ENCODE measurements at regions of chr13 and their contacts with region 1.

Region 1: DNA sequence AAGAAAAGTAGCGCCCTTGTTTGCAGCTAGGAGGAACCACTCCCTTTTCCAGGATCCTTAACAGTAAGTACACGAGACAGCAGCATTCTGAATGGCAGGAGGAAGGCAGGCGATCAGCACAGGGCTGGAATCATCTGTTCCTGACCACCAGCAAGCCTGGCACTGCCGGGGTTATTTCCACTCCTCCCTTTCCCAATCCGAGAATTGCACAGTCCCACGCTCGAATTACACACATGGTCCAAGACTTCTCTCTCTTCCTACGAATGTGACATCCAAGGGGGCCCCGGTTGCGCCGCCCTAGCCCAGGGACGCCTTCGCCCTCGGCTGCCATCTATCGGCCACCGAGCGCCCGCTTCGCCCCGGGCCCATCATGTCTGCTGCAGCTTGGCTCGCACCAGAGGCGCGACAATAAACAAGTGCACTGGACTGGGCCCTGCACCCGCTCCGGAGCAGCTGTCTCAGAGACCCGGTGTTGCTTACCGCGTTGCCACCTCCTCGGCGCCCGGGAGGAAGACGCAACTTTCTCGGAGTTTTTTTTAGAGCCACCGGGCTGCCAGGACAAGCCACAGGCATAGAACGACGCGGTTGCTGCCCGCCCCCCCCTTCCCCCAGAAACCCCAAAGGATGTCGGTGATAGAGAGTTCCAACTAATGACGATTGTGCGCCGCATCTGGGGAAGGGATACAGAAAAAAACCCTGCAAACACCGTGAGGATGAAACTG is at the start of gene SLITRK5:
- DNase-seq: peak; percentile 85 to 93 (median 88)
- H3K4me3 ChIP-seq: peak within 1 kb of the TSS; percentile 60 to 92 (median 81)
- H3K27ac ChIP-seq: peak within 1 kb of the TSS; percentile 49 to 96 (median 89)
- H3K27me3 ChIP-seq: peaks cover 0 to 20% (median 0%) of the 10 kb centered on the region in 45 donors
- CTCF ChIP-seq: peak; percentile 55 to 96 (median 86)
- total RNA-seq, gene SLITRK5: 7.8 to 27.3 (median 18.2) TPM

Region 2: GRCh38 chr13:86870444-86870843 is 800.7 kb before region 1 on chr13:
- intact Hi-C with region 1: loop called in 1 of 2 experiments (anchors 10 kb)
- DNase-seq: no peak
- H3K4me3 ChIP-seq: peak overlapping the region in 2 of 59 donors; percentile 25 to 39
- H3K27ac ChIP-seq: peak overlapping the region in 2 of 59 donors; percentile 19 to 55
- H3K27me3 ChIP-seq: no peaks in the 10 kb centered on the region
- CTCF ChIP-seq: peak; percentile 59 to 95 (median 76)

Region 3: DNA sequence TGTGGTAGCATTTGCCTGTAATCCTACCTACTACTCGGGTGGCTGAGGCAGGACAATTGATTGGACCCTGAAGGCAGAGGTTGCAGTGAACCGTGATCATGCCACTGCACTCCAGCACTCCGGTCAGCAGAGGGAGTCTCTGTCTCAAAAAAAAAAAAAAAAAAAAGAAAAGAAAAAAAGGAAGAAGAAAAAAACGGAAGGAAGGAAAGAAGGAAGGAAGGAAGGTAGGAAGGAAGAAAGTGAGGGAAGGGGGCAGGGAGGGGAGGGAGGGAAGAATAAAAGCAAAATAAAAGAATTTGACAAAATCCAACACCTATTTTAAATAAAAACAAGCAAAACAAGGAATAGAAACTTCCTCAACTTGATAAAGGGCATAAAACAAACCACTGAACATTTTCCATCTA is 411.6 kb before region 1 on chr13:
- intact Hi-C with region 1: loop called in 1 of 2 experiments (anchors 5 kb)
- DNase-seq: no peak
- H3K4me3 ChIP-seq: no peak overlapping the region
- H3K27ac ChIP-seq: no peak overlapping the region
- H3K27me3 ChIP-seq: no peaks in the 10 kb centered on the region
- CTCF ChIP-seq: peak in 45 of 56 donors; percentile 16 to 59 (median 37)

Measured in dorsolateral prefrontal cortex (tissue), 120 donors.